ENCODE measurements at regions of chr11 and their contacts with region 1.

Region 1: GRCh38 chr11:65314501-65315203 is at the start of gene CDC42EP2:
- DNase-seq: no peak
- H3K4me3 ChIP-seq: peak within 1 kb of the TSS; percentile 94
- H3K27me3 ChIP-seq: no peaks in the 10 kb centered on the region
- CTCF ChIP-seq: no peak
- polyA plus RNA-seq, gene CDC42EP2: 11.7 and 23.2 TPM in 2 replicates

Region 2: DNA sequence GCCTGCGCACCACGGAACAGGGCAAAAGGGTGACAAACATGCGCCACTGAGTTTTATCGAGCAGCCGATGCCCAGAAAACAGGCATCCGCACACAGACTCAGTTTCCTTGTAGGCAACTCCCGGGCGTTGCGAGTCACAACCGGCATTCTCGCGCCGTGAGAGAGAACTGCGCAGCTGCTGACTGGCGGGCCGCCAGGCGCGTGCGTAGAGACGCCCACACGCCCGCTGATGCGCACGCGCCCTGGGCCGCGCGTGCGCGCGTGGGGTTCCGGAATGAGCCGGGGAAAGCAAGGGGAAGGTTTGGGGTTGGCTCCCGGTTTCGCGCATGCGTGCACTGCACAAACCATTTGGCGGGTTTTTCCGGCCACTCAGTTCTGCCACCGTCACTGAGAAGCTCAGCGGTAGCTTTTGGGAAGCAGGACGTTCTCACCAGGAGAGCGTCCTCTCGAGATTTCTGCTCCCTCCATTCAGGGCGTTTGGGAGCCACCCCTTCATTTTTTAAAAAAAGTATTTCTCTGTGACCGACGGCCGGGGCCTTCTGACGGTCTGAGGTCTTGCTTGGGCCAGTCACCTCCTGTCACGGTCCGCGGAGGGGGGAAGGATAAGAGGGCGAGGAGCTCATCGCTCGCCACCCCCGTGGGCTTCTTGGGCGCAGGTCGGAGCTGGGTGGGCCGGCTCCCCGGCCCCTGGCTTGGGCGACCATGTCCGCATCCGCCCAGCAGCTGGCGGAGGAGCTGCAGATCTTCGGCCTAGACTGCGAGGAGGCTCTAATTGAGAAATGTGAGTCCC is 52.9 kb before region 1 on chr11 and contains the start of gene POLA2:
- CTCF ChIA-PET with region 1: interaction called, 40 read pairs
- POLR2A ChIA-PET with region 1: no interaction called
- DNase-seq: peak; percentile 81
- H3K4me3 ChIP-seq: peak within 1 kb of the TSS; percentile 67
- H3K27me3 ChIP-seq: no peaks in the 10 kb centered on the region
- CTCF ChIP-seq: no peak
- polyA plus RNA-seq, gene POLA2: 11.8 and 14.5 TPM in 2 replicates

Region 3: DNA sequence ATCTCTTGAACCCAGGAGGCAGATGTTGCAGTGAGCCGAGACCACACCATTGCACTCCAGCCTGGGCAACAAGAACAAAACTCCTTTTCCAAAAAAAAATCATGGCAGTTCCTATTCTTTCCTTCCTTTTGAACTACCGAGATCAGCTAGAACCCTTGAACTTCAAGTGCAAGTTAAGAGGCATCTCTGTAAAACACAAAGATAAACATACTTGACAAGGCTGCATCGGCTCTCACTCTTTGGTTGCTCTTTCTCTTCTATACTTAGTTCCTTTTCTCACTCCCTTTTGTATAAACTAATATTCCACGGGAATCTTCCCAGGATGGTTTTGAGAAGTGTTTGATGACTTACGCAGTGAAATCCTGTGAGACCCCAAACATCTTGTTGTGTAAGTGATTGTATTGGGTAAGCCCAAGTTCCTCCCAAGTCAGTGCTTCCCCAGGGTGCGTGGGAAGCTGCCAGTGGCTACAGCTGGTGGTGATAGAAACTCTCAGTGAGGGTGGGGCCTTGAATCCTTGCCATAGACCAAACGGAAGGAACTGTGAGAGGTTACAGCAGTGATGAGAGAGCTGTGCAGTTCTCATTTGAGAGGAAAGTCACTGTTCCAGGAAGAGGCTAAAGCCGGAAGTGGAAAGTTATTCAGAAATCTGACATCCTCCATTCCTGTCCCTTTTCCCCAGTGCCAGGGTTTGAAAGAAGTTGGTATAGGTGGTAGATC is 24.0 kb before region 1 on chr11:
- CTCF ChIA-PET with region 1: interaction called, 273 read pairs
- POLR2A ChIA-PET with region 1: interaction called, 24 read pairs
- DNase-seq: peak; percentile 98
- H3K4me3 ChIP-seq: no peak overlapping the region
- H3K27me3 ChIP-seq: no peaks in the 10 kb centered on the region
- CTCF ChIP-seq: no peak

Region 4: DNA sequence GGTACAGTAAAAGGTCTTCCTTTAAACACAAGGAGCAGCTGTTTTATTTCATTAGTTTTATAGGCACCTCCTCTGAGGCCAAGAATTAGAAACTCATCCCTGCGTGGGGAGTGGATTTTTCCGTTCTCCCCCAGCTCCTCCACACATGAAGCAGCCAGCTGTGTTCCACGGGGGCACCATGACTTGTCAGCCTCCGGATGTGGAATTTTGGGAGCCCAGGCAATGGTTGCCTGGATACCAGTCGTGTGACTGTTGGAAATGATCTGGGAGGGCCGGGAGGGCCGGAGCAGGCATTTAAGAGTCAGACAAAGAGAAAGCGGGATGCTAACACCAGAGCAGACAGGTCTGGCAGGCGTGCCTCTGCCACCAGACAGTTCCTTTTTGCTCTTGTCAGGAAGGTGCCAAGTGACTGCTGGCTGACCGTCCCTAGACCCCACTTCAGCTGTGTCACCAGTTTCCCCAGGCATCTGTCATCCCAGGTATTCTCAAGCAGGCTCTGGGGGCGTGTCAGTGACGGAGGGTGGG is 15.9 kb before region 1 on chr11:
- CTCF ChIA-PET with region 1: interaction called, 273 read pairs
- POLR2A ChIA-PET with region 1: interaction called, 5 read pairs
- DNase-seq: peak; percentile 86
- H3K4me3 ChIP-seq: no peak overlapping the region
- H3K27me3 ChIP-seq: no peaks in the 10 kb centered on the region
- CTCF ChIP-seq: no peak

Region 5: DNA sequence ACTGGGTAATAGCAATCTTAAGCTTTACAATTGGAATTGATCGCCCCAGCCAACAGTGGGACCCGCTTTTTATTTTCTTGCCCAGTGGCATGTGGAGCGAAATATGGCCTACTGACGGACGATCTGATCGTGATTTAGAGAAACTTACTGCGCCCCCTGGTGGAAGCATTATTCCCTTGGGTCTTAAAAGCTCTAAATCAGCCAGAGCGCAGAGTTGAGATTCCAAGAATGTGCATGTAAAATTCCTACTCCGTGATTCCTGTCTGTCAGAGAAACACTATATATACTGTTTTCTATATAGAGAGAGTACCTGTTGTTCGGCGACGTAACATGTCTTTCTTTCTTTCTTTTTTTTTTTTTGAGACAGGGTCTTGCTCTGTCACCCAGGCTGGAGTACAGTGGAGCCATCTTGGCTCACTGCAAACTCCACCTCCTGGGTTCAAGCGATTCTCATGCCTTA is 15.3 kb after region 1 on chr11:
- CTCF ChIA-PET with region 1: interaction called, 145 read pairs
- POLR2A ChIA-PET with region 1: interaction called, 4 read pairs
- DNase-seq: no peak
- H3K4me3 ChIP-seq: no peak overlapping the region
- H3K27me3 ChIP-seq: no peaks in the 10 kb centered on the region
- CTCF ChIP-seq: peak; percentile 71

Region 6: GRCh38 chr11:65354265-65355012 is 39.8 kb after region 1 on chr11 and contains the start of gene TIGD3:
- CTCF ChIA-PET with region 1: interaction called, 15 read pairs
- POLR2A ChIA-PET with region 1: no interaction called
- DNase-seq: peak; percentile 77
- H3K4me3 ChIP-seq: peak within 1 kb of the TSS; percentile 52
- H3K27me3 ChIP-seq: peaks cover 5% of the 10 kb centered on the region
- CTCF ChIP-seq: no peak
- polyA plus RNA-seq, gene TIGD3: 0.04 and 0.06 TPM in 2 replicates